CD8-positive, alpha-beta T cell (primary cell): ENCODE measurements at regions of chr17 and their contacts with region 1.

Region 1: GRCh38 chr17:43694077-43694870 is 32.6 kb upstream of the MEOX1 start:
- DNase-seq: peak; percentile 49 to 86 (median 77)
- ATAC-seq: peak; percentile 99
- H3K4me3 ChIP-seq: no peak overlapping the region
- H3K4me3 Mint-ChIP-seq: no peak overlapping the region
- H3K27ac ChIP-seq: no peak overlapping the region
- H3K27ac Mint-ChIP-seq: no peak overlapping the region
- H3K4me1 ChIP-seq: no peaks in the 10 kb centered on the region
- H3K4me1 Mint-ChIP-seq: no peaks in the 10 kb centered on the region
- H3K27me3 ChIP-seq: no peaks in the 10 kb centered on the region
- H3K27me3 Mint-ChIP-seq: peaks cover 19% of the 10 kb centered on the region
- CTCF ChIP-seq: peak; percentile 85

Region 2: DNA sequence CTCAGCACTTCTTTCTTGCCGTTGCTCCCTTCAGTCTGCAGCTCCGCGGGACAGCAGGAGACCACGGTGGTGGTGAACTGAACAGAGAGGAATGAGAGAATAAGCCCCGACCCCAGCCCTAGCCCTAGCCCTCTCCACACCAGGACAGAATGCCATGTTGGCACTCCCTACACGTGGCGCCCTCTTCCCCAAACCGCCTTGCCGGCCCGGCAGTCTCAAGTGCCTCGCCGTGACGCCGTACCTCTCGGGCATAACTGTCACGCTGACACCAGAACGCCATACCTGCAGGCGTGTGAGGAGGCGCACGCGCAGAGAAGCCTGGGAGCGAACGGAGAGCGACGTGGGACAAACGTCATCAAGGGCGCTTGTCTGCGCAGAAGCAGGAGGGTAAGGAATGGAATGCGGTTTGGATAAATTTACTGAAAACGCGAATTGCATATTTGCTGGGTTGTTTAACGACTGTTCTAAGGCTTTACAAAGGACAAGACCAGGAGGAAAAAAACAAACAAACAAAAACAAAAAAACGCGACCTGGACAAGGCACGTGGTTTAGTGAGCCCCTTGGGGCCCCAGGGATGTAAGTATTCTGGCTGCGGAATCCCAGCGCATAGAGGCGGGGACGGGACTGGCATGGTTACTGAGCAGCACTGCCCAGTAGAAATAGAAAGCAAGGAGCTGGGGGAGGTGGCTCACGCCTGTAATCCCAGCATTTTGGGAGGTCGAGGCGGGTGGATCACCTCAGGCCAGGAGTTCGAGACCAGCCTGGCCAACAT is 729.9 kb before region 1 on chr17 and contains the start of gene AARSD1:
- CTCF ChIA-PET with region 1: no interaction called
- POLR2A ChIA-PET with region 1: no interaction called
- intact Hi-C with region 1: no loop called
- DNase-seq: peak; percentile 80 to 96 (median 88)
- ATAC-seq: peak; percentile 99
- H3K4me3 ChIP-seq: peak within 1 kb of the TSS; percentile 48 to 86
- H3K4me3 Mint-ChIP-seq: peak within 1 kb of the TSS; percentile 87
- H3K27ac ChIP-seq: peak within 1 kb of the TSS; percentile 63 to 82
- H3K27ac Mint-ChIP-seq: peak within 1 kb of the TSS; percentile 84
- H3K4me1 ChIP-seq: peaks cover 7% of the 10 kb centered on the region
- H3K4me1 Mint-ChIP-seq: peaks cover 19% of the 10 kb centered on the region
- H3K27me3 ChIP-seq: no peaks in the 10 kb centered on the region
- H3K27me3 Mint-ChIP-seq: no peaks in the 10 kb centered on the region
- CTCF ChIP-seq: no peak
- total RNA-seq, gene AARSD1: 75.1 to 87.6 TPM

Region 3: DNA sequence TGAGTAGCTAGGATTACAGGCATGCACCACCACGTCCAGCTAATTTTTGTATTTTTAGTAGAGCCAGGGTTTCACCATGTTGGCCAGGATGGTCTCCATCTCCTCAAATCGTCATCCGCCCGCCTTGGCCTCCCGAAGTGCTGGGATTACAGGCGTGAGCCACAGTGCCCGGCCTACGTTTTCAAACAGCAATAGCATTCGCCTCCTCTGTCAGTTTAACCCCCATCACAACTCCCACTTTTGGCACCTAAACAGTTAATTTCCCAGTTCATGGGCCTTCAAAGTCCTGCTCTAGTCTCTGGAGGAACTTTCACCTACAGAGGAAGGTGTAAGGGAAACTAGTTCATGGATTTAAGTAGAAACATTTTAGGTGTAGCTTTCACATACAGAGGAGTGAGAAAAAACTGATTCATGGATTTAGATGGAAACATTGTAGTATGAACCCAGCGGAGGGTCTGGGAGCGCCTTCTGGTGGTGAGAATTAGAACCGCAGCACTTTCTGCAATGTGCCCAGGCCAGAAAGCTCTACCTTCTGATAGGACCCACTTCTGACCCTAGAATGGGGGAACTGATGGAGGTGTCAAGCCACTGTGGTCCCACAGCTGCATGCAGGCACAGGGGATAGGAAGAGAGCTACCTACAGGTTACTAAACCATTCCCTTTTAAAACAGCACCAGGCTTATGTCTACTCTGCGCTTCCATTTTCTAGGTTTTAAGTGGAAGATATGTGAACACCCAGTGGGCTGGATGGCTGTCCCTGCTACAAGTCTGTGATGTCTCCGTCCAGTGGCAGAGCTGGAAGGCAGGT is 20.6 kb before region 1 on chr17:
- CTCF ChIA-PET with region 1: interaction called, 13 read pairs
- POLR2A ChIA-PET with region 1: no interaction called
- intact Hi-C with region 1: no loop called
- DNase-seq: peak; percentile 53 to 79 (median 72)
- ATAC-seq: peak; percentile 76
- H3K4me3 ChIP-seq: no peak overlapping the region
- H3K4me3 Mint-ChIP-seq: no peak overlapping the region
- H3K27ac ChIP-seq: no peak overlapping the region
- H3K27ac Mint-ChIP-seq: no peak overlapping the region
- H3K4me1 ChIP-seq: peaks cover 9% of the 10 kb centered on the region
- H3K4me1 Mint-ChIP-seq: peaks cover 11% of the 10 kb centered on the region
- H3K27me3 ChIP-seq: no peaks in the 10 kb centered on the region
- H3K27me3 Mint-ChIP-seq: peaks cover 2% of the 10 kb centered on the region
- CTCF ChIP-seq: peak; percentile 86

Region 4: GRCh38 chr17:43713494-43714162 is 19.4 kb after region 1 on chr17:
- CTCF ChIA-PET with region 1: interaction called, 13 read pairs
- POLR2A ChIA-PET with region 1: interaction called, 4 read pairs
- intact Hi-C with region 1: no loop called
- DNase-seq: no peak
- ATAC-seq: no peak
- H3K4me3 ChIP-seq: peak overlapping the region; percentile 6 to 11
- H3K4me3 Mint-ChIP-seq: peak overlapping the region; percentile 52
- H3K27ac ChIP-seq: no peak overlapping the region
- H3K27ac Mint-ChIP-seq: no peak overlapping the region
- H3K4me1 ChIP-seq: no peaks in the 10 kb centered on the region
- H3K4me1 Mint-ChIP-seq: peaks cover 12% of the 10 kb centered on the region
- H3K27me3 ChIP-seq: peaks cover 9 to 11% of the 10 kb centered on the region in 2 experiments
- H3K27me3 Mint-ChIP-seq: peaks cover 55% of the 10 kb centered on the region
- CTCF ChIP-seq: no peak

Region 5: DNA sequence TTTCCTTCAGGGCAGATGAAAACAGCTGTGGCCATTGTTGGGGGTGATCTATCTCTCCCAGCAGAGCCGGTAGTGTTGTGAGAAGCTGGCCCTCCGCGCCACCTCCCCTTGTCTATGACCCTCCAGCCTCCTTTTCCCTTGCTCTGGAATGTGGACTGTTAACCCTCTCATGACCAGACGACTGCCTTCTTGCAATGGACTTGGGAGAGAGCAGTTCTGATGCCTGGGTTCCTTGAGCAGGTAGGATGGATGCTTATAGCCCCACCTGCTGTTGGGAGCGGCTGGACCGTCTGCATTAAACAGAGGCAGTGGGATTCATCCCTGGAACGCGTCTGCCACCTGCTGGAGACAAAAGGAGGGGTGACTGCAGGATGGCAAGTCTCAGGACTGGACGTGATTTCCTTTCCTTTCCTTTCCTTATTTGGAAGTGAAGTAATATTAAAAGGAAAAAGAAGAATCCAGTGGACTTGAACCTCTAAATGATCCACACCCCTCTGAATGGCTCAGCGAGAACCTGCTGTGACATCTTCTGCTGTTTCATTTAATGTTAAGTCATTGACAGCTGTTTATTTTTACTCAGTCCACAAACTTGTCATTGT is 66.1 kb after region 1 on chr17:
- CTCF ChIA-PET with region 1: no interaction called
- POLR2A ChIA-PET with region 1: interaction called, 3 read pairs
- intact Hi-C with region 1: loop called (anchors 1 kb)
- DNase-seq: peak; percentile 76 to 92 (median 88)
- ATAC-seq: peak; percentile 98
- H3K4me3 ChIP-seq: no peak overlapping the region
- H3K4me3 Mint-ChIP-seq: no peak overlapping the region
- H3K27ac ChIP-seq: no peak overlapping the region
- H3K27ac Mint-ChIP-seq: no peak overlapping the region
- H3K4me1 ChIP-seq: no peaks in the 10 kb centered on the region
- H3K4me1 Mint-ChIP-seq: no peaks in the 10 kb centered on the region
- H3K27me3 ChIP-seq: peaks cover 0 to 7% of the 10 kb centered on the region in 2 experiments
- H3K27me3 Mint-ChIP-seq: peaks cover 22% of the 10 kb centered on the region
- CTCF ChIP-seq: peak; percentile 89

Region 6: DNA sequence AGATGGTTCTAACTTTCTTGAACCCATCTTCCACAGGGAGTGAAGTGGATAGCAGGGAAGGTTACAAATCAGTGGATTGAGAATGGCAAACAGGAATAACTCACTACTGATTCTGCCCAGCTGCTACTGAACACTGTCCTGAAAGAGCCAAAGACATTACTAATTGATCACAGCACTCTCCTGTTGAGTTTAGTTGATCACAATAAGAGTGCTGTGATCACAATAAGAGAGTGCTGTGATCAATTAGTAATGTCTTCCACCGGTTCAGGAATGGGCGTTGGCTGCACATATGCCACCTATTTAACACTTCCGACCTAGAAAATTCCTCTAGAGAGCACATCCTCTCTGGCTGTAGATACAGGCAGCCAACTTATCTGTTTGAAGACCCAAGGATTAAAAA is 97.3 kb after region 1 on chr17:
- CTCF ChIA-PET with region 1: no interaction called
- POLR2A ChIA-PET with region 1: no interaction called
- intact Hi-C with region 1: no loop called
- DNase-seq: no peak
- ATAC-seq: no peak
- H3K4me3 ChIP-seq: no peak overlapping the region
- H3K4me3 Mint-ChIP-seq: no peak overlapping the region
- H3K27ac ChIP-seq: no peak overlapping the region
- H3K27ac Mint-ChIP-seq: no peak overlapping the region
- H3K4me1 ChIP-seq: no peaks in the 10 kb centered on the region
- H3K4me1 Mint-ChIP-seq: peaks cover 8% of the 10 kb centered on the region
- H3K27me3 ChIP-seq: peaks cover 0 to 3% of the 10 kb centered on the region in 2 experiments
- H3K27me3 Mint-ChIP-seq: peaks cover 25% of the 10 kb centered on the region
- CTCF ChIP-seq: no peak

Region 7: DNA sequence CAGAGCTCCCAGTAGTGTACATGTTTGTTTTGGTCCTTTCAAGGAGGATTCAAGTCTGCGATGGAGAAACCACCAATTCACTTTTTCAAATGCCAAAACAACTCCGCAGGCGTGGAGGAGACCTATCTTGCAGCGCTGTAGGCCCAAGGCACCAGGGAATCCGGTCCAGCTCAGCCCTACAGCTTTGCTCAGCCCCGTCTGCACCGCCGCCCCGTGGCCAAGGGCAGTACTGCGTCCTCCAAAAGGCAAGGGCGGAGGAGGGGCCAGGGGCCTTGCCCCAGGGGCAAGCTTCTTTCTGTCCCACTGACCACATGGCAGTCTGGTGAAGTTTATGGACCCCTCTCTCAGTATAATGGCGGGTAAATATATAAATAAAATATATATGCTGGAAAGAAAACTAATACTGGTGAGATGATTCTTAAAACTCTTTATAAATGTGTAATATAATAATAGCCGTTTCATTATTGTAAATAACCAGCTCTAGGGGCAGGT is 152.0 kb after region 1 on chr17:
- CTCF ChIA-PET with region 1: interaction called, 22 read pairs
- POLR2A ChIA-PET with region 1: no interaction called
- intact Hi-C with region 1: loop called in 1 of 2 experiments (anchors 1 kb)
- DNase-seq: peak; percentile 55 to 83 (median 72)
- ATAC-seq: peak; percentile 100
- H3K4me3 ChIP-seq: no peak overlapping the region
- H3K4me3 Mint-ChIP-seq: no peak overlapping the region
- H3K27ac ChIP-seq: no peak overlapping the region
- H3K27ac Mint-ChIP-seq: no peak overlapping the region
- H3K4me1 ChIP-seq: no peaks in the 10 kb centered on the region
- H3K4me1 Mint-ChIP-seq: no peaks in the 10 kb centered on the region
- H3K27me3 ChIP-seq: peaks cover 0 to 2% of the 10 kb centered on the region in 2 experiments
- H3K27me3 Mint-ChIP-seq: peaks cover 31% of the 10 kb centered on the region
- CTCF ChIP-seq: peak; percentile 91